ENCODE measurements at regions of chr12 and their contacts with region 1.

Region 1: DNA sequence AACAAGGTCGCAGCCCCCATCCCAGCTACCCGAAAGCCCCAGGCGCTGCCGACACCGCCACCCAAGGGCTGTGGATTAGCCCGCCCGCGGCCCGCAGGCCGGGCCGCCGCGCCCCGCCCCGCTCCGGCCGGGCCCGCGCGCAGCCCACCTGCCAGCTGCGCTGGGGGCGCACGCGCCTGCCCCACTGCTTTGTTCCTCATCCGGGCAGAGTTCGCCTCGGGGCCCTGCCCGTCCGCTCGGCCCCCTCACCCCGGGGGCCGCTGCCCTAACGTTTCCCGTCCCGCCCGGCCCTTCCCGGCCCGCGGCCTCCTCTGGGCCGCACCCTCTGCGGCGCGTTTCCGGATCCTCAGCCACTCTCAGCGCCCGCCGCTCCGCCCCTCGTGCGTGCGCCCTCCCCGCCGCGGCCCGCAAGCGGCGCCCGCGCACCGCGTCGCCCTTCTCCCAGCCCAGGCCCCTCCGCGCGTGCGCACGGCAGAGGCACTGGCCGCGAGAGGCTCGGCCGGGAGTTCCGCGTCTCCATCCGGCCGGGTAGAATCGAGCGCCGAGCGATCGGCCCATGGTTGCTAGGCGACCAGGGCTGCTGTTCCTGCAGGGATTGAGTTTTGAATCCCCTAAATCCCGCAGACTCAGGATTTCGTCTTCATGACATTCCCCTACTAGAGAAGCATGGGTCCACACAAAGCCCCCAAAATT is at the start of gene PRDM4:
- DNase-seq: peak; percentile 91 to 96
- H3K4me3 ChIP-seq: peak within 1 kb of the TSS; percentile 85
- H3K4me3 Mint-ChIP-seq: peak within 1 kb of the TSS; percentile 83
- H3K27ac Mint-ChIP-seq: peak within 1 kb of the TSS; percentile 84
- H3K4me1 ChIP-seq: no peaks in the 10 kb centered on the region
- H3K4me1 Mint-ChIP-seq: peaks cover 6% of the 10 kb centered on the region
- H3K27me3 ChIP-seq: no peaks in the 10 kb centered on the region
- H3K27me3 Mint-ChIP-seq: no peaks in the 10 kb centered on the region
- CTCF ChIP-seq: peak in 1 of 2 experiments; percentile 12
- total RNA-seq, gene PRDM4: 19.1 and 19.4 TPM in 2 replicates

Region 2: GRCh38 chr12:107805488-107806180 is 44.7 kb after region 1 on chr12:
- CTCF ChIA-PET with region 1: no interaction called
- POLR2A ChIA-PET with region 1: no interaction called
- intact Hi-C with region 1: loop called (anchors 1 kb)
- DNase-seq: no peak
- H3K4me3 ChIP-seq: no peak overlapping the region
- H3K4me3 Mint-ChIP-seq: no peak overlapping the region
- H3K27ac Mint-ChIP-seq: no peak overlapping the region
- H3K4me1 ChIP-seq: no peaks in the 10 kb centered on the region
- H3K4me1 Mint-ChIP-seq: no peaks in the 10 kb centered on the region
- H3K27me3 ChIP-seq: no peaks in the 10 kb centered on the region
- H3K27me3 Mint-ChIP-seq: no peaks in the 10 kb centered on the region
- CTCF ChIP-seq: no peak

Measured in Caco-2 (cell line).